Ascending aorta (tissue), 2 donors: ENCODE measurements at regions of chr22 and their contacts with region 1.

Region 1: GRCh38 chr22:23144932-23145873 is at the start of gene RAB36:
- DNase-seq: peak; percentile 96 to 99
- H3K4me3 ChIP-seq: peak within 1 kb of the TSS; percentile 54 to 57
- H3K27ac ChIP-seq: peak within 1 kb of the TSS; percentile 70 to 88
- H3K4me1 ChIP-seq: peaks cover 0 to 23% of the 10 kb centered on the region in 2 donors
- H3K27me3 ChIP-seq: no peaks in the 10 kb centered on the region
- CTCF ChIP-seq: no peak
- total RNA-seq, gene RAB36: 1.8 TPM

Region 2: GRCh38 chr22:23069502-23070357 is 75.5 kb before region 1 on chr22:
- intact Hi-C with region 1: loop called (anchors 2 kb)
- DNase-seq: peak; percentile 72 to 94
- H3K4me3 ChIP-seq: peak overlapping the region; percentile 60 to 74
- H3K27ac ChIP-seq: no peak overlapping the region
- H3K4me1 ChIP-seq: peaks cover 4 to 10% of the 10 kb centered on the region in 2 donors
- H3K27me3 ChIP-seq: no peaks in the 10 kb centered on the region
- CTCF ChIP-seq: no peak

Region 3: GRCh38 chr22:23521441-23522113 is 376.4 kb after region 1 on chr22:
- intact Hi-C with region 1: loop called (anchors 2 kb)
- DNase-seq: peak; percentile 47 to 94
- H3K4me3 ChIP-seq: peak overlapping the region; percentile 51 to 64
- H3K27ac ChIP-seq: peak overlapping the region; percentile 91 to 96
- H3K4me1 ChIP-seq: peaks cover 12 to 17% of the 10 kb centered on the region in 2 donors
- H3K27me3 ChIP-seq: no peaks in the 10 kb centered on the region
- CTCF ChIP-seq: peak in 1 of 3 experiments; percentile 24